ENCODE measurements at regions of chr6 and their contacts with region 1.

Region 1: GRCh38 chr6:39302669-39303424 is 11.4 kb downstream of the KCNK17 start:
- DNase-seq: peak; percentile 84 to 88
- H3K4me3 ChIP-seq: no peak overlapping the region
- H3K4me3 Mint-ChIP-seq: peak overlapping the region; percentile 57
- H3K27ac Mint-ChIP-seq: no peak overlapping the region
- H3K4me1 ChIP-seq: peaks cover 17% of the 10 kb centered on the region
- H3K4me1 Mint-ChIP-seq: peaks cover 10% of the 10 kb centered on the region
- H3K27me3 ChIP-seq: no peaks in the 10 kb centered on the region
- H3K27me3 Mint-ChIP-seq: no peaks in the 10 kb centered on the region
- CTCF ChIP-seq: peak; percentile 87 to 90

Region 2: DNA sequence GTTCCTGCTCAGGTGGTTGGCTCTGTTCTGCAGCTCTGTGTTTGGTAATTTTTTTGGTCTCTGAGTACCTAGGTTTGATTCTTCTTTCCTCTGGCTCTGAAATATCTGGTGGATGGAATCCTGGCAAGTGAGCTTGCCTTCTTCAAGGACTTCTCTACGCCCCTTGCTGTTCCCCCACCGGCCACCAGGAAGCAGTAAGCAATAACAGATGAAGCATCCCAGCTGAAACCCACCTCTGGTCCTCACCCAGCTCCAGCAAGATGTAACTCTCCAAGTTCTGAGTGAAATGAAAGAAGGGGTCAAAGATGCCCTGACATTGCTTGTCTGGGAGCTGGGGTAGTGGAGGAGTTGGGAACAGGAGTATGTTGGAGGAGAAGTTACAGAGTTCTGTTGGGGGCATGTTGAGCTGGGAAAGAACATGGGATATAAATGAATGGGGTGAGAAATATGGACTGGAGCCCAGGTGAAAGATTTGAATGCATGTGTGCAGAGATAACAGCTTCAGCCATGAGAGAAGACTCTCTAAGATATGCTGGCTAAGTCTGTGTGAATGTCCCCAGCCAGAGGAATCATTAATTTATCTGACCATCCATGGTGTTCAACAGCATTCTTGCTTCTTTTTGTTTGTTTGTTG is 305.6 kb before region 1 on chr6:
- CTCF ChIA-PET with region 1: interaction called, 10 read pairs
- POLR2A ChIA-PET with region 1: no interaction called
- intact Hi-C with region 1: no loop called
- DNase-seq: peak; percentile 62 to 71
- H3K4me3 ChIP-seq: no peak overlapping the region
- H3K4me3 Mint-ChIP-seq: no peak overlapping the region
- H3K27ac Mint-ChIP-seq: no peak overlapping the region
- H3K4me1 ChIP-seq: no peaks in the 10 kb centered on the region
- H3K4me1 Mint-ChIP-seq: no peaks in the 10 kb centered on the region
- H3K27me3 ChIP-seq: no peaks in the 10 kb centered on the region
- H3K27me3 Mint-ChIP-seq: peaks cover 14% of the 10 kb centered on the region
- CTCF ChIP-seq: peak; percentile 69 to 88

Region 3: DNA sequence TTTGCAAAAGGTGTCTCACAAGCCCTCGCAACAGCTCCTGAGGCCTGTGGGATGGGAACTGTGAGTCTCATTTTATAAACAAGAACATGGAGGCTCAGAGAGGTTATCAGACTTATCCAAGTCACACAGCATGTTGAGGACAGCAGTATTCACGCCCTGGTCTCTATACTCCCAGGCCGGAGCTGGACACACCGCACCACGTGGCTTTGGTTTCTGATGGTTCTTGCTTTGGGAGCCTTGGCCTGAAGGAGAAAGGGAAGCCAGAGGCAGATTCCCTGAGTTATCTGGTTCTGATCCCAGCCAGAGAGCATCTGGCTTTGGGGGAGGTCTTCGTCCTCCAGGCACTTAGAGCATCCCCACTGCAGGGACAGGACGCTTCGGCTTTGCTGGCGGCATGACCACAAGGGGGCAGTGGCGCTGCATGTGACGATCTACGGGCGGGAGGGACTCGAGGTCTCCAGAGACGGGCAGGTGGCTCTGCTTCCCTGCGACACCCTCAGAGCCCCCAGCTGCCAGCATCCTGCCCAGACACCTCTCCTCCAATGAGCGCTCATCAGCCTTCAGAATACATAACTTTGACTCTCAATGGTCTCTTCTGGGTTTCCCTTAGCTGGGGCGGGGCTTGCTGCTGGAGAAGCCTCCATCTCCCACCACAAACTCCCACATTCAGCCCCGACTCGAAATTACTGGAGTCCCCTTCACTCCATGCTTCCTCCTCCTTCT is 136.5 kb before region 1 on chr6:
- CTCF ChIA-PET with region 1: interaction called, 34 read pairs
- POLR2A ChIA-PET with region 1: no interaction called
- intact Hi-C with region 1: loop called (anchors 1 kb)
- DNase-seq: peak; percentile 86 to 91
- H3K4me3 ChIP-seq: no peak overlapping the region
- H3K4me3 Mint-ChIP-seq: peak overlapping the region; percentile 10
- H3K27ac Mint-ChIP-seq: no peak overlapping the region
- H3K4me1 ChIP-seq: peaks cover 14% of the 10 kb centered on the region
- H3K4me1 Mint-ChIP-seq: peaks cover 9% of the 10 kb centered on the region
- H3K27me3 ChIP-seq: no peaks in the 10 kb centered on the region
- H3K27me3 Mint-ChIP-seq: no peaks in the 10 kb centered on the region
- CTCF ChIP-seq: peak; percentile 95

Region 4: GRCh38 chr6:39209360-39209811 is 93.5 kb before region 1 on chr6:
- CTCF ChIA-PET with region 1: interaction called, 12 read pairs
- POLR2A ChIA-PET with region 1: no interaction called
- intact Hi-C with region 1: no loop called
- DNase-seq: no peak
- H3K4me3 ChIP-seq: no peak overlapping the region
- H3K4me3 Mint-ChIP-seq: no peak overlapping the region
- H3K27ac Mint-ChIP-seq: peak overlapping the region; percentile 45
- H3K4me1 ChIP-seq: peaks cover 71% of the 10 kb centered on the region
- H3K4me1 Mint-ChIP-seq: peaks cover 46% of the 10 kb centered on the region
- H3K27me3 ChIP-seq: no peaks in the 10 kb centered on the region
- H3K27me3 Mint-ChIP-seq: no peaks in the 10 kb centered on the region
- CTCF ChIP-seq: no peak

Region 5: GRCh38 chr6:39266375-39266774 is 36.5 kb before region 1 on chr6:
- CTCF ChIA-PET with region 1: interaction called, 7 read pairs
- POLR2A ChIA-PET with region 1: no interaction called
- intact Hi-C with region 1: loop called (anchors 2 kb)
- DNase-seq: peak in 1 of 2 experiments; percentile 15
- H3K4me3 ChIP-seq: no peak overlapping the region
- H3K4me3 Mint-ChIP-seq: peak overlapping the region; percentile 26
- H3K27ac Mint-ChIP-seq: peak overlapping the region; percentile 63
- H3K4me1 ChIP-seq: peaks cover 58% of the 10 kb centered on the region
- H3K4me1 Mint-ChIP-seq: peaks cover 47% of the 10 kb centered on the region
- H3K27me3 ChIP-seq: no peaks in the 10 kb centered on the region
- H3K27me3 Mint-ChIP-seq: no peaks in the 10 kb centered on the region
- CTCF ChIP-seq: no peak

Region 6: DNA sequence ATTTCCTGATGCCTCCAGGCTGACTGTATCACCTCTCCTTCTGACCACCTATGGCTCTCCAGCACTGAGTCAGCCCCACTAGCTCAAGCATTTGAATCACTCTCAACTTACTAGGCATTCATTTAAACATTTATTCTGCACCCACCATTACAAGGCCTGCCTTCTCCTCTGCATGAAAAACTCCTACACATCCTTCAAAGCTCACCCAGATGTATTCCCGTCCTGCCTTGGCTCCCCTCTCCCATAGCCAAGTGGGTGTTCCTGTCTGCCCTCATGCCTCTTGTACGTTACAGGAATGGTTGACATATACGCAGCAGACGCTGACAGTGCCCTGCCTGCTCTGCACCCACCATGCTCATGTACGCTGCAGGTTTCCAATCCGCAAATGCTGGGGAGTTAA is 10.2 kb before region 1 on chr6:
- CTCF ChIA-PET with region 1: no interaction called
- POLR2A ChIA-PET with region 1: no interaction called
- intact Hi-C with region 1: no loop called
- DNase-seq: no peak
- H3K4me3 ChIP-seq: no peak overlapping the region
- H3K4me3 Mint-ChIP-seq: no peak overlapping the region
- H3K27ac Mint-ChIP-seq: no peak overlapping the region
- H3K4me1 ChIP-seq: peaks cover 2% of the 10 kb centered on the region; the same call in 1 of the 2 replicates
- H3K4me1 Mint-ChIP-seq: peaks cover 11% of the 10 kb centered on the region
- H3K27me3 ChIP-seq: no peaks in the 10 kb centered on the region
- H3K27me3 Mint-ChIP-seq: no peaks in the 10 kb centered on the region
- CTCF ChIP-seq: no peak

Measured in Caco-2 (cell line).